Panc1 (cell line): ENCODE measurements at regions of chr6 and their contacts with region 1.

Region 1: GRCh38 chr6:153002607-153003365 is at the start of gene MTRF1L:
- DNase-seq: peak; percentile 82
- ATAC-seq: peak; percentile 97
- H3K4me3 ChIP-seq: peak within 1 kb of the TSS; percentile 76 to 100
- H3K27ac ChIP-seq: peak within 1 kb of the TSS; percentile 96
- H3K4me1 ChIP-seq: peaks cover 18% of the 10 kb centered on the region
- H3K27me3 ChIP-seq: no peaks in the 10 kb centered on the region
- CTCF ChIP-seq: no peak
- total RNA-seq, gene MTRF1L: 22.7 TPM

Region 2: GRCh38 chr6:152836523-152836922 is 166.3 kb before region 1 on chr6:
- CTCF ChIA-PET with region 1: no interaction called
- POLR2A ChIA-PET with region 1: no interaction called
- in situ Hi-C with region 1: no loop called
- intact Hi-C with region 1: no loop called
- DNase-seq: no peak
- ATAC-seq: no peak
- H3K4me3 ChIP-seq: no peak overlapping the region
- H3K27ac ChIP-seq: no peak overlapping the region
- H3K4me1 ChIP-seq: no peaks in the 10 kb centered on the region
- H3K27me3 ChIP-seq: 0 out of 2 replicates have a peak, but pooled peaks cover 2% of the 10 kb centered on the region
- CTCF ChIP-seq: no peak

Region 3: GRCh38 chr6:152957796-152958195 is 45.0 kb before region 1 on chr6:
- CTCF ChIA-PET with region 1: no interaction called
- POLR2A ChIA-PET with region 1: interaction called, 12 read pairs
- in situ Hi-C with region 1: no loop called
- intact Hi-C with region 1: no loop called
- DNase-seq: no peak
- ATAC-seq: no peak
- H3K4me3 ChIP-seq: no peak overlapping the region
- H3K27ac ChIP-seq: no peak overlapping the region
- H3K4me1 ChIP-seq: no peaks in the 10 kb centered on the region
- H3K27me3 ChIP-seq: peaks cover 4% of the 10 kb centered on the region; the same call in 1 of the 2 replicates
- CTCF ChIP-seq: no peak

Region 4: GRCh38 chr6:153192943-153193885 is 190.4 kb after region 1 on chr6:
- CTCF ChIA-PET with region 1: no interaction called
- POLR2A ChIA-PET with region 1: interaction called, 15 read pairs
- in situ Hi-C with region 1: no loop called
- intact Hi-C with region 1: no loop called
- DNase-seq: no peak
- ATAC-seq: no peak
- H3K4me3 ChIP-seq: no peak overlapping the region
- H3K27ac ChIP-seq: no peak overlapping the region
- H3K4me1 ChIP-seq: no peaks in the 10 kb centered on the region
- H3K27me3 ChIP-seq: no peaks in the 10 kb centered on the region
- CTCF ChIP-seq: no peak